A673 (cell line): ENCODE measurements at regions of chr6 and their contacts with region 1.

Region 1: GRCh38 chr6:44475779-44476434 is 88.4 kb downstream of the CDC5L start:
- DNase-seq: peak; percentile 75
- H3K4me3 ChIP-seq: no peak overlapping the region
- H3K27ac ChIP-seq: no peak overlapping the region
- H3K4me1 ChIP-seq: no peaks in the 10 kb centered on the region
- H3K27me3 ChIP-seq: no peaks in the 10 kb centered on the region
- CTCF ChIP-seq: peak; percentile 94

Region 2: DNA sequence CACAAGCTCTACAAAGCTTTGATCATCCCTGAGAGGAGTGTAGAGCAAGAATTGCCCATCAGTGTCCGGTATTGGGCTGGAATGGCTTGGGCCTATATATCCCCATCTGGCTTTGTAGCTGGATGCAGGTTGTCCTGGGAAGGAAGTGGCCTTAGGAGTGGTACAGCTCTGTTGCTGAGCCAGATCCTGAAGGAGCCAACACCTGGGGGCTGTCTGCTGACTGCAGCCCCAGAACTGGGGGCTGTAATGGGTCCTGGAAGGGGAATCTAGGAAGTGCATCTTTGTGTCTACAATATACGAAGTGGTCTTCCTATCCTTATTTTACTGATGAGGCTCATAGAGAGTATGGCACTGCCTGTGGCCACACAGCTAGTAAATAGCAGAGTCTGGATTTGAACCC is 57.5 kb after region 1 on chr6:
- CTCF ChIA-PET with region 1: no interaction called
- POLR2A ChIA-PET with region 1: no interaction called
- intact Hi-C with region 1: no loop called
- DNase-seq: no peak
- H3K4me3 ChIP-seq: no peak overlapping the region
- H3K27ac ChIP-seq: no peak overlapping the region
- H3K4me1 ChIP-seq: peaks cover 7% of the 10 kb centered on the region
- H3K27me3 ChIP-seq: no peaks in the 10 kb centered on the region
- CTCF ChIP-seq: no peak

Region 3: GRCh38 chr6:44598679-44599078 is 122.8 kb after region 1 on chr6:
- CTCF ChIA-PET with region 1: interaction called, 6 read pairs
- POLR2A ChIA-PET with region 1: no interaction called
- intact Hi-C with region 1: loop called (anchors 5 kb)
- DNase-seq: no peak
- H3K4me3 ChIP-seq: no peak overlapping the region
- H3K27ac ChIP-seq: no peak overlapping the region
- H3K4me1 ChIP-seq: no peaks in the 10 kb centered on the region
- H3K27me3 ChIP-seq: no peaks in the 10 kb centered on the region
- CTCF ChIP-seq: no peak

Region 4: DNA sequence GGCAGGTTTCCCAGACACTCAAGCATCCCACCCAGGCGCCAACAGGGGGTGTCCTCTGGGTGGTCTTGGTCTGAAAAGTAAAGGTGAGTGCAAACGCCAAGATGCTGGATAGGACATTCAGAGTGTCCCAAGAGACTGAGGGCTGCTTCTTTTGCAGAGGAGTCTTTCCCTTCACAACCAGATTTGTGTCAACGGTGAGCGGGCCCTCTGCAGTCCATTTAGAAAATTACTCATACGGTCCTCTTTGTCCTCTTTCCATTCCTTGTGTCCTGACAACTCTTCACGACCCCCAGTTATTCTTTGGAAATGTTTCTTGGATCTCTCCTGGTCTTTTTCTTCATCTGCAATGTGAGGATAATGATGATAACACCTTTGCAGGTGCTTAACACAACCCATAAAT is 169.4 kb after region 1 on chr6:
- CTCF ChIA-PET with region 1: interaction called, 16 read pairs
- POLR2A ChIA-PET with region 1: no interaction called
- intact Hi-C with region 1: loop called (anchors 1 kb)
- DNase-seq: peak; percentile 35
- H3K4me3 ChIP-seq: no peak overlapping the region
- H3K27ac ChIP-seq: no peak overlapping the region
- H3K4me1 ChIP-seq: no peaks in the 10 kb centered on the region
- H3K27me3 ChIP-seq: no peaks in the 10 kb centered on the region
- CTCF ChIP-seq: peak; percentile 39; the same call in 1 of the 2 replicates

Region 5: GRCh38 chr6:45400021-45400420 is 924.1 kb after region 1 on chr6:
- CTCF ChIA-PET with region 1: no interaction called
- POLR2A ChIA-PET with region 1: interaction called, 15 read pairs
- intact Hi-C with region 1: no loop called
- DNase-seq: no peak
- H3K4me3 ChIP-seq: no peak overlapping the region
- H3K27ac ChIP-seq: no peak overlapping the region
- H3K4me1 ChIP-seq: peaks cover 3% of the 10 kb centered on the region
- H3K27me3 ChIP-seq: no peaks in the 10 kb centered on the region
- CTCF ChIP-seq: no peak

Region 6: DNA sequence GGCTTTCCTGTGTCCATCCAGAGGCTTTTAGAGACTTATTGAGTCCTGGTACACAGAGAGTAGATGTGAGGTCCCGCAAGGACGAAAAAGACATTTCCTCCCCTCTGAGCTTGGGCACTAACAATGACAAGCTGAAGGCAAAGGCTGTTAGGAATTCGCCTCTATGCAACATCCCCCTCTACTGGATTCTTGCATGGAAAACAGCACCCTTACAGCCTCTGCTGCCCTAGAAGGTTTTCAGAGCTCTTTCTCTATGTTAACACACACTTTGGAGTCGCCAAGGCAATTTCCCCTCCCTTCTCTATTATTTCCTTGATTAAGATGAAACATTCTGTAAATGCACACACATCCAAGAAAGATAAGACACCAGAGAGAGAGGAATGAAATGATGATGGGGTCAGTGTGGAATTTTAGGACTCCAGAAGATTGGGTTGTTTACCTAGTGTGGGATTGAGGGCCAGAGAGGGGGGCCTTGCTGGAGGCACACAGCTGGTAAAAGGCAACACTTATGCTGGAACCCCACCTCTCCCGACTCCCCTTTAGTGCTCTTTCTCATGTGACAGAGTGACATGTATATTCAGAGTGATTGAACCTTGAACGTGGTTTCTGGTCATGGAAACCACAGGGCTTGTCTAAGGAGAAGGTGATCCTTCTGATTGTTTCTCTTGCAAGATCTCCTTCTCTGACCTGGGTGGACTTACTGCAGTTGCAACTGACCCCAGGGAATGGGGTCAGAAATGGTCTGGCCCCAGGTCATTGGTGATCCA is 1239.0 kb after region 1 on chr6:
- CTCF ChIA-PET with region 1: interaction called, 25 read pairs
- POLR2A ChIA-PET with region 1: no interaction called
- intact Hi-C with region 1: loop called (anchors 10 kb)
- DNase-seq: peak; percentile 87
- H3K4me3 ChIP-seq: no peak overlapping the region
- H3K27ac ChIP-seq: no peak overlapping the region
- H3K4me1 ChIP-seq: peaks cover 5% of the 10 kb centered on the region
- H3K27me3 ChIP-seq: no peaks in the 10 kb centered on the region
- CTCF ChIP-seq: peak; percentile 84

Region 7: DNA sequence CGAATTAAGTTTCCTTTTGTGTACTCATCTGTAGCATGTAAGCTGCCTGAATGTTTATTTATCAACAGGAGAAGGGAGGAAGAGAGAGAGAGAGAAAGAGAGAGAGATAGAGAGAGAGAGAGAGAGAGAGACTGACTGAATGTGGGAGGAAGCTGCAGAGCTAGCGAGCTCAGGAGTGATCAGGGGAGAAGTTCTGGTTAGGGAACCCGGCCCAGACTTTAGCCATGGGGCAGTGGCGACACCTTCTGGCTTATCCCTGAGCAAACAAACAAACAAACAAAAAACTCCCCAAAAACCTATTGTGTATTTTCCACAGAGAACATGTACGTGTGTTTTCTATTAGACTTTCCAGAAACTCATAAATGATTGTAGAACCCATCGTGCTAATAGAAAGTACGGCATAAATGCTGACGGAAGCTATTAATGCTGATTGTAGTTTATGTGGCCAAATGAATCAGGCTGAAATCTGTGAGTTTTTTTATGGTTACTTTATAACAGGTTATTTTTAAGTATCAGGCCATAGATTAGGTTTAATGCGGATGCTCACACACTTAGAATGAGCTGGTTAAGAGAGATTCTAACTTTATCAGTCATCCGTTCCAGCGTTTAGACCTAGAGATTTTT is 1446.9 kb after region 1 on chr6:
- CTCF ChIA-PET with region 1: interaction called, 11 read pairs
- POLR2A ChIA-PET with region 1: no interaction called
- intact Hi-C with region 1: loop called (anchors 5 kb)
- DNase-seq: peak; percentile 66
- H3K4me3 ChIP-seq: no peak overlapping the region
- H3K27ac ChIP-seq: no peak overlapping the region
- H3K4me1 ChIP-seq: no peaks in the 10 kb centered on the region
- H3K27me3 ChIP-seq: no peaks in the 10 kb centered on the region
- CTCF ChIP-seq: peak; percentile 76